GM10248 (cell line): ENCODE measurements at regions of chr1 and their contacts with region 1.

Region 1: DNA sequence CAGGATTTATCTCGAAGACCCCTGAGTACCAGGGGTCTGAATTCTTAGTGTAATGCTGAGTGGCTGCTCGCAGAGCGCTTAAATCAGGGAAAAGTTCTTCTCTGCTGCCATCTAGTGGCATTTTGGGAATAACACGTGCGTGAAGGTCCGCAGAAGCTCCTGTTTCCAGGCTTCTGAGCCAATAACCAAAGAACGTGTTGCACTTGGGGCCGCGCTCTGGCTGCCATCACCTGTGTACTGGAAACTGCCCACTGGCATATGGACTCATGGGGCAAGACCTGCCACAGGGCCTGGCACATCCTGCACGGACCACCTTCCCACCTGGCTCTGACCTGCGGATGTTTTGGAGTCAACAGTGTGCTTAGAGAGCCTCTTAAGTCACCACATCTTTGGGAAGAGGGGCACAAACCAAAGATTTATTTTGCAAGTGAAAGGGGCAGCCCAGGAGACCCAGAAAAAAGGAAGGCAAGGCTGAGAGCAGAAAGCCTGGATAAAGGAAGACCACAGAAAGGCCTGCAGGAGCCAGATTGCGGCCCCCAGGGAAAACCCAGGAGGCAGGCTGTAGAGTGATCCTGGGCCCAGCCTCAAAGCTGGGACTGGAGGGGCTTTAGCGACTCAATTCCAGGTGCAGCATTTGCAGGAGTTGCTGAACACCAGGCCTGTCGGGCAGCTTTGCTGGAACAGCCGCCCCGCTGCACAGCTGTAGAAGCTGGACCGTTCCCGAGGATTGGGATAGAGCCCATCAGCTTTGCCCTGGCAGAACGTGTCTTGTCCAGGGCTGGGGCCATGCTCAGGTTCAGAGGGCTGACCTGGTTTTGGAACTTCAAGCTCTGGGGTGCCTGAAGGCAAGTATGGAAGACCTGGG is 13.0 kb downstream of the CHIT1 start:
- DNase-seq: peak; percentile 77
- CTCF ChIP-seq: peak; percentile 83

Region 2: DNA sequence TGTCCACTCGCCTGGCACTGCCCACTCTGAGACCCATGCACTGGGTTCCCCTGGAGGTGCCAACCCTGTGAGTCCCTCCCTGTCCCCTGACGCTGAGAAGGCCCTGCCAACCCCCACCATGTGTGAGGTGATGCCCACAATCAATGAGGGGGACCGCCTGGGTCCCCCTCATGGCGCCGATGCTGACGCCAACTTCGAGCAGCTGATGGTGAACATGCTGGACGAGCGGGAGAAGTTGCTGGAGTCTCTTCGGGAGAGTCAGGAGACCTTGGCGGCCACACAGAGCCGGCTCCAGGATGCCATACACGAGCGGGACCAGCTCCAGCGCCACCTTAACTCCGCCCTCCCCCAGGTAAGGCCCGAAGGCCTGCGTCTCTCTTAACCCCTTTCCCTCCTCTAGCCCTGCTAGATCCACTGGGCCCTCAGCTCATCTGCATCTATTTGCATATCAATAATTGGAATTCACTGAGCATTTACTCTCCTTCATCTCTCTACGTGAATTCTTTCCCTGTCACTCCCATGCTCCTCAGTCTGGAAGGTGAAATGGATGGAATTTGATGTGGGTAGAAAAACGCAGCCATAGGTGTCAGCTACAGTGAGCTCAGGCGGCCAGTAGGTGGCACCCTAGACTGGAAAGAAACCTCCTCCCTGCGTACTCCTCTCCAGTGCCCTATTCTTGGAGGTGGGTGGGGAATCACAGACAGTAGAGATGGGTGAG is 177.5 kb before region 1 on chr1:
- CTCF ChIA-PET with region 1: interaction called, 174 read pairs
- POLR2A ChIA-PET with region 1: no interaction called
- DNase-seq: peak; percentile 77
- CTCF ChIP-seq: peak; percentile 90

Region 3: GRCh38 chr1:203084588-203085502 is 131.7 kb before region 1 on chr1:
- CTCF ChIA-PET with region 1: interaction called, 24 read pairs
- POLR2A ChIA-PET with region 1: no interaction called
- DNase-seq: peak; percentile 69
- CTCF ChIP-seq: peak; percentile 49

Region 4: DNA sequence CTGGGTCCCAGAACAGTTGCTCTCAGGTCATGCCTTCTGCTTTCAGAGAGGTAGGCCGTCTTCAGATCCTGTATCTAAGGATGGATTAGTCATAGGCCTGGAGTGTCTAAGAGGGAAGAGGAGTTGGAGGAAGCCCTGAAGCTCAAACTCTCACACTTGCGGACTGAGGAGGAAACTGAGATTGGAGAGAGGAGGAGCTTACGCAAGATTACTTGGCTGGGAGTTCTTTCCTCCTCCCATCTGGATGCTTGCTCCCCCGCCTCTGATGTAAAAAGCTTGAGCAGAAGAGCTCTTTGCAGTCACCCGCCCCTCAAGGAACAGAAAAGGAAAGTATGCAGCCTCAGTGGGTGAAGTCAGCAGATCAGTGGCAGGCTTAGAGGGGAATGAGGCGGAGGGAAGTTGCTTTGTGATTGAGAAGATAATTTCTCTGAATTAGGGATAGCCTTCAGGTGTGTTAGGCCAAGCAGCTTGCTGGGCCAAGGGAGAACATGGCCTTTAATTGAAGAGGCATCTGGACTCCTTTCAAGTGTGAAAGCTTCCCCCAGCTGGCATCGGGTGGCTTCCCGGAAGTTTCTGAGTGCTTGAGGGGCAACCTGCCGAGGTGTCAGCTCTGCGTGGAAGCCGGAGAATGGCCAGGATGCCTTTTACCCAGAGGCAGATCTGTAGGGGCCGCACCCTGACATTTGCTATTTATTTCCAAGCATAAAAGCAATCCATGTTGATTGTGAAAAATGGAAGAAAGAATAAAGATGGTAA is 82.4 kb before region 1 on chr1:
- CTCF ChIA-PET with region 1: interaction called, 11 read pairs
- POLR2A ChIA-PET with region 1: no interaction called
- DNase-seq: no peak
- CTCF ChIP-seq: no peak

Region 5: GRCh38 chr1:203172128-203173010 is 44.1 kb before region 1 on chr1:
- CTCF ChIA-PET with region 1: interaction called, 18 read pairs
- POLR2A ChIA-PET with region 1: no interaction called
- DNase-seq: peak; percentile 81
- CTCF ChIP-seq: peak; percentile 85

Region 6: GRCh38 chr1:203202431-203203245 is 13.9 kb before region 1 on chr1:
- CTCF ChIA-PET with region 1: interaction called, 43 read pairs
- POLR2A ChIA-PET with region 1: no interaction called
- DNase-seq: no peak
- CTCF ChIP-seq: no peak

Region 7: GRCh38 chr1:203239526-203240305 is 23.2 kb after region 1 on chr1:
- CTCF ChIA-PET with region 1: interaction called, 16 read pairs
- POLR2A ChIA-PET with region 1: no interaction called
- DNase-seq: peak; percentile 12
- CTCF ChIP-seq: no peak